T-cell (primary cell): ENCODE measurements at regions of chr13 and their contacts with region 1.

Region 1: DNA sequence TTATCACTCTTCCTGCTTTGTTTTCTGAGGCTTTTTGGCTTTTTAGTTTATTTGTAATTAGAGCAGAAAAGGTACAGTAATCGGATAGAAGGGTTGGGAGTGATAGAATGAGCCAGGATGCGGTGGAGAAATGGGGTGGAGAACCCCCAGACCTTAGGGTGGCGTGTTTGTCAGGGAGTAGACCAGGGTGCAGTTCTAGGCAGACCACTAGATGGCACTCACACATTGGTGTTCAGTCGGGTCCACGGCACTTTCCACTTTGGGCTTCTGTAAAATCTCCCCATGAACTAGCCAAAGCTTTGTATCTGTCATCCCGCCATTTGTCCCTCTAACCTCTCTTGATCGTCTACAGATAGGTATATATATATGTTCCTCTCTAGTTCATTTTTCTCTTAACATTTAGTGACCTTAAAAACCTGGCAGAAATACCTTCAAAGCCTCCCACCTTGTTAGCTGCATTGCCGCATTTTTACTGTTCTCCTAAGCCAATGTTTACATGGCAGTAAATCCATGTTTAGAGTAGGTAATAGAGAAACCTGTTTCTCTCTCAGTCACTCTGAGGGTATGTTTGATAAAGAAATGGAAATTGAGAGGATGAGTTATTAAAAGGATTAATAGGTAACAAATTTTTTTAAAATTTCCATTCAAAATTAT is 154.9 kb downstream of the TM9SF2 start:
- DNase-seq: peak; percentile 56 to 93 (median 75)
- ATAC-seq: peak; percentile 55 to 66 (median 62)
- H3K4me3 ChIP-seq: peak overlapping the region in 1 of 2 donors; percentile 36
- H3K4me3 Mint-ChIP-seq: peak overlapping the region; percentile 74 to 79 (median 79)
- H3K27ac ChIP-seq: peak overlapping the region; percentile 92
- H3K27ac Mint-ChIP-seq: peak overlapping the region; percentile 96 to 97
- H3K4me1 ChIP-seq: peaks cover 23 to 40% of the 10 kb centered on the region in 2 experiments
- H3K4me1 Mint-ChIP-seq: peaks cover 48 to 51% (median 49%) of the 10 kb centered on the region in 3 donors
- H3K27me3 ChIP-seq: no peaks in the 10 kb centered on the region
- H3K27me3 Mint-ChIP-seq: no peaks in the 10 kb centered on the region

Region 2: DNA sequence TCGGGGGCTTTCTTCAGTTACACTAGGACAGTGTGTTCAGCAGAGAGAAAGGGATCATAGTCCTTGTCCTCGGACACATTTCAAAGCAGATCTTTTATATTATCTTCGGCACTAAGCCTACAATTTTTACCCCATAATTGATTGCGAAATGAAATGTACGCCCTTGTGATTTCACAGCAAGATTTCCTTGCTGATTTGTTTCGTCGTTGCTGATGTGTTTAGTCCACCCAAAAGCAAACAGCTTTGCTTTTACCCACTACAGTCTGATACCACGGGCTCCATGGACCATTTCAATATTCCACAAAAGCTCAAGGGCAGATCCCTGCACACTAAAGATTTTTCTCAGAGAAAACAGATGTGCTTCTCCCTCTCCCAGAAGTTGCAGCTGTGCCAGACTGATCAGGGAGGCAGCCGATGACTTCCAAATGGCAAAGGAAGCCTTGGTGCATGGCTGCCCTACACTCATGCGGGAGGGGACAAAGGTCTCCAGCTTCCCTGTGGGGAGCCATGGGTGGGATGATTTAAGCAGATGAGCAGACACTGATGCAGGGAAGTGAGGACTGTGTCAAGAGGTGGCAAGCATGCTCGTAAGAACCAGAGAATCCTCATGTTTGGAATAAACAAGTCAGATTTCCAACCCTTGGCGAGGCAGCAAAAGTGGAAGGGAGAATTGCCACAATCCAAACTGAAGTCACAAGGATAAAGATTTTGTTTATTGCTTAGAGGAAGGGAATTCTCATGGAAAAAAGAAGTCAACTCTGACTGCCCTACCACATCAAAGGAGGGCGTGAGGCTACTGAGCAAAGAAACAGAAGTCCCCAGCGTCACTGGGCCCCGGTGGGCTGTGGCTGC is 1160.4 kb before region 1 on chr13:
- CTCF ChIA-PET with region 1: no interaction called
- POLR2A ChIA-PET with region 1: no interaction called
- DNase-seq: no peak
- ATAC-seq: no peak
- H3K4me3 ChIP-seq: no peak overlapping the region
- H3K4me3 Mint-ChIP-seq: no peak overlapping the region
- H3K27ac ChIP-seq: no peak overlapping the region
- H3K27ac Mint-ChIP-seq: peak overlapping the region; percentile 36 to 71
- H3K4me1 ChIP-seq: peaks cover 4 to 24% of the 10 kb centered on the region in 2 experiments
- H3K4me1 Mint-ChIP-seq: peaks cover 68 to 80% (median 79%) of the 10 kb centered on the region in 3 donors
- H3K27me3 ChIP-seq: no peaks in the 10 kb centered on the region
- H3K27me3 Mint-ChIP-seq: no peaks in the 10 kb centered on the region

Region 3: DNA sequence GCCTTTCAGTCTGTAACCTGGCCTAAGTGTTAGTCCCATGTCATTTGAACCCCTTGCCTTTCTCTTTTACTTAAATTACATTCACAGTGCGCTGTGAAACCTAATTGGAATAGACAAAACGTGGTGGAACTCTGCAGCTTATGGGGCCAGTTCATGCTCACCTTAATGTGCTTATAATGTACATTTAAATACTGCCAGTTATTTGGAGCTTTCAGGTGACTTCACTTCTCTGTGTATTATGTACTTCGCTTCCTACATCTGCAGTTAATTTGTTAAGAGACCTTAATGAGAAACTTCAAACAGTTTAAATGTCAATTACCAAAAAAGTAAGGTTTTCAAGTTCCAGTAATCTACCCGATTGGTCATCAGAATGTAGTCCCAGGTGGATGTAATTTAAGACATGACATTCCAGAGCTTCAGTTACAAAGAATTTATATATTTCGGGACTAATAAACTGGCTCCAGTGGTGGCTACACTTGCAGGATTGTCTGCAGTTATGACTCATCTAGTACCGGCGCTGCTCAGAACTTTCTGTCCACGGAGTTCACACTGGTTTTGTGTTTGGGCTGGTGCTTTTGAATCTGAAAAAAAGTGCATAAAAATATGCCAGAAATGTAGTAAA is 29.6 kb before region 1 on chr13:
- CTCF ChIA-PET with region 1: no interaction called
- POLR2A ChIA-PET with region 1: no interaction called
- DNase-seq: no peak
- ATAC-seq: no peak
- H3K4me3 ChIP-seq: no peak overlapping the region
- H3K4me3 Mint-ChIP-seq: no peak overlapping the region
- H3K27ac ChIP-seq: no peak overlapping the region
- H3K27ac Mint-ChIP-seq: no peak overlapping the region
- H3K4me1 ChIP-seq: peaks cover 0 to 8% of the 10 kb centered on the region in 2 experiments
- H3K4me1 Mint-ChIP-seq: peaks cover 18 to 51% (median 19%) of the 10 kb centered on the region in 3 donors
- H3K27me3 ChIP-seq: no peaks in the 10 kb centered on the region
- H3K27me3 Mint-ChIP-seq: no peaks in the 10 kb centered on the region

Region 4: DNA sequence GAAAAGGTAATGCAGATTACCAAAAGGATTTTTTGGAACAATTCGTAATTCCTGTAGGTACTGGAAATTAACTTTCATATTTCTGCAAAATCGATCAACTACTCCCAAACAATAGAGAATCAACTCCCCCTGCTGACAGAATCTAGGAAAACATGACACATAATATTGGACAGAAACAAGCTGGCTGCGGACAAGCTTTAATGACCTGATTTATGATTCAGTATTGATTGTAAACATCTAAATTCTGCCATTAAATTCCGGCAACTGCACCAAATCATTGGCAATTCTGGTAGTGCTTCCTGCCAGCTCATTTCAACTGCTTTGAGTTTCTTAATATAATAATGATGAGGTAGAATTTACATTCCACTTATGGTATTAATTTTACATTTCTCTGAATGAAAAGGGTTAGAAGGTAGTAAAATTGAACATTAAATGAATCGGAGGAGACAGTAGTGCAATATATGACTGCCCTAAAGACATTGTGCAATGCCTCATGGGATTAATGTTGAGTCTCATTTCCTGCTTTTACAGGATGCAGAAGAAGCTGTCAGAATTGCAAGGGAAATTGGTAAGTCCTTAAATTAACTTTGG is 579.2 kb after region 1 on chr13:
- CTCF ChIA-PET with region 1: interaction called, 4 to 15 read pairs
- POLR2A ChIA-PET with region 1: interaction called in 1 of 2 experiments, 7 read pairs
- DNase-seq: peak in 4 of 35 experiments; percentile 4 to 67 (median 13)
- ATAC-seq: no peak
- H3K4me3 ChIP-seq: no peak overlapping the region
- H3K4me3 Mint-ChIP-seq: peak overlapping the region in 1 of 3 donors; percentile 21
- H3K27ac ChIP-seq: no peak overlapping the region
- H3K27ac Mint-ChIP-seq: peak overlapping the region in 1 of 2 donors; percentile 44
- H3K4me1 ChIP-seq: peaks cover 3% of the 10 kb centered on the region in 2 experiments
- H3K4me1 Mint-ChIP-seq: peaks cover 4 to 7% (median 6%) of the 10 kb centered on the region in 3 donors
- H3K27me3 ChIP-seq: no peaks in the 10 kb centered on the region
- H3K27me3 Mint-ChIP-seq: no peaks in the 10 kb centered on the region

Region 5: GRCh38 chr13:100514788-100515409 is 858.7 kb after region 1 on chr13:
- CTCF ChIA-PET with region 1: interaction called, 4 to 17 read pairs
- POLR2A ChIA-PET with region 1: no interaction called
- DNase-seq: peak; percentile 31 to 85 (median 63)
- ATAC-seq: peak; percentile 88 to 96 (median 92)
- H3K4me3 ChIP-seq: no peak overlapping the region
- H3K4me3 Mint-ChIP-seq: no peak overlapping the region
- H3K27ac ChIP-seq: no peak overlapping the region
- H3K27ac Mint-ChIP-seq: no peak overlapping the region
- H3K4me1 ChIP-seq: peaks cover 0 to 2% of the 10 kb centered on the region in 2 experiments
- H3K4me1 Mint-ChIP-seq: peaks cover 4 to 17% (median 16%) of the 10 kb centered on the region in 3 donors
- H3K27me3 ChIP-seq: no peaks in the 10 kb centered on the region
- H3K27me3 Mint-ChIP-seq: no peaks in the 10 kb centered on the region

Region 6: GRCh38 chr13:101127741-101128353 is 1471.6 kb after region 1 on chr13:
- CTCF ChIA-PET with region 1: interaction called in 1 of 2 experiments, 18 read pairs
- POLR2A ChIA-PET with region 1: no interaction called
- DNase-seq: peak in 11 of 35 experiments; percentile 2 to 61 (median 3)
- ATAC-seq: peak; percentile 46 to 70 (median 57)
- H3K4me3 ChIP-seq: no peak overlapping the region
- H3K4me3 Mint-ChIP-seq: no peak overlapping the region
- H3K27ac ChIP-seq: no peak overlapping the region
- H3K27ac Mint-ChIP-seq: no peak overlapping the region
- H3K4me1 ChIP-seq: no peaks in the 10 kb centered on the region
- H3K4me1 Mint-ChIP-seq: no peaks in the 10 kb centered on the region
- H3K27me3 ChIP-seq: no peaks in the 10 kb centered on the region
- H3K27me3 Mint-ChIP-seq: peaks cover 5 to 11% of the 10 kb centered on the region in 2 donors